Activated CD4-positive, alpha-beta memory T cell treated with anti-CD3 and anti-CD28 coated beads for 36 hours (primary cell): ENCODE measurements at regions of chr2 and their contacts with region 1.

Region 1: GRCh38 chr2:12728221-12728777 is 11.6 kb downstream of the TRIB2 start:
- DNase-seq: peak; percentile 78
- H3K4me3 Mint-ChIP-seq: peak overlapping the region; percentile 46
- H3K27ac Mint-ChIP-seq: peak overlapping the region; percentile 70
- H3K4me1 Mint-ChIP-seq: peaks cover 83% of the 10 kb centered on the region
- H3K27me3 Mint-ChIP-seq: no peaks in the 10 kb centered on the region

Region 2: DNA sequence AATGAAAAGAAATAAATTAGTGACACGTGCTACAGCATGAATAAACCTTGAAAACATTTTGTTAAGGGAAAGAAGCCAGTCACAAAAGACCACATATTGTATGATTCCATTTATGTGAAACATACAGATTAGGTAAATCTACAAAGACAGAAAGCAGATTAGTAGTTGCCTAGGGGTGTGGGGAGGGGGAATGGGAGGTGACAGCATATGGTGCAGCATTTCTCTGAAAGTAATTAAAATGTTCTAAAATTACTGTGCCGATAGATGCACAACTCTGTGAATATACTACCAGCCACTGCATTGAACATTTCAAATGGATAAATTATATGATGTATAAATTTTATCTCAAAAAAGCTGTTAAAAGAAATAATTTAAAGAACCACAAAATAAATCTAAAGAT is 149.5 kb after region 1 on chr2:
- CTCF ChIA-PET with region 1: no interaction called
- POLR2A ChIA-PET with region 1: no interaction called
- intact Hi-C with region 1: no loop called
- DNase-seq: no peak
- H3K4me3 Mint-ChIP-seq: no peak overlapping the region
- H3K27ac Mint-ChIP-seq: no peak overlapping the region
- H3K4me1 Mint-ChIP-seq: no peaks in the 10 kb centered on the region
- H3K27me3 Mint-ChIP-seq: no peaks in the 10 kb centered on the region

Region 3: DNA sequence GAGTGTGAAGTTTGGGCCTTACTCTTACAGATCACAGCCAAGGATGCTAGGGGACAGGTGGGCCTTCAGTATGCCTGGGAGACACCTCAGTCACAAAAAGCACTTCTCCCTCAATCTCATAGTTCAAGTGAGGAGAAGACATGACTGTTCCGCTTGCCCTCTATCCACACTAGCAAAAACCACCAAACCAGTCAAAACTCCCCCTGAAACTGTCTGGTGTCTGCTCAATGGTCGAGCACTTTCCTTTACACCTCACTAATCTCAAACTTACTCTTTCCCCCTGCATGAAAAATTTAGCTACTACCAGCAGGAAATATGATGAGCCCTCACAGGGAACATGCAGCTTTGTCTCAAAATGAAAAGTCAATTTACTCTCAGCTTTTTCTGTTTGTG is 220.7 kb after region 1 on chr2:
- CTCF ChIA-PET with region 1: no interaction called
- POLR2A ChIA-PET with region 1: no interaction called
- intact Hi-C with region 1: loop called (anchors 5 kb)
- DNase-seq: peak; percentile 46
- H3K4me3 Mint-ChIP-seq: no peak overlapping the region
- H3K27ac Mint-ChIP-seq: no peak overlapping the region
- H3K4me1 Mint-ChIP-seq: peaks cover 9% of the 10 kb centered on the region
- H3K27me3 Mint-ChIP-seq: peaks cover 4% of the 10 kb centered on the region

Region 4: GRCh38 chr2:12965540-12966269 is 237.4 kb after region 1 on chr2:
- CTCF ChIA-PET with region 1: no interaction called
- POLR2A ChIA-PET with region 1: no interaction called
- intact Hi-C with region 1: loop called (anchors 1 kb)
- DNase-seq: no peak
- H3K4me3 Mint-ChIP-seq: no peak overlapping the region
- H3K27ac Mint-ChIP-seq: no peak overlapping the region
- H3K4me1 Mint-ChIP-seq: peaks cover 19% of the 10 kb centered on the region
- H3K27me3 Mint-ChIP-seq: peaks cover 2% of the 10 kb centered on the region